HEK293T (cell line): ENCODE measurements at regions of chr10 and their contacts with region 1.

Region 1: DNA sequence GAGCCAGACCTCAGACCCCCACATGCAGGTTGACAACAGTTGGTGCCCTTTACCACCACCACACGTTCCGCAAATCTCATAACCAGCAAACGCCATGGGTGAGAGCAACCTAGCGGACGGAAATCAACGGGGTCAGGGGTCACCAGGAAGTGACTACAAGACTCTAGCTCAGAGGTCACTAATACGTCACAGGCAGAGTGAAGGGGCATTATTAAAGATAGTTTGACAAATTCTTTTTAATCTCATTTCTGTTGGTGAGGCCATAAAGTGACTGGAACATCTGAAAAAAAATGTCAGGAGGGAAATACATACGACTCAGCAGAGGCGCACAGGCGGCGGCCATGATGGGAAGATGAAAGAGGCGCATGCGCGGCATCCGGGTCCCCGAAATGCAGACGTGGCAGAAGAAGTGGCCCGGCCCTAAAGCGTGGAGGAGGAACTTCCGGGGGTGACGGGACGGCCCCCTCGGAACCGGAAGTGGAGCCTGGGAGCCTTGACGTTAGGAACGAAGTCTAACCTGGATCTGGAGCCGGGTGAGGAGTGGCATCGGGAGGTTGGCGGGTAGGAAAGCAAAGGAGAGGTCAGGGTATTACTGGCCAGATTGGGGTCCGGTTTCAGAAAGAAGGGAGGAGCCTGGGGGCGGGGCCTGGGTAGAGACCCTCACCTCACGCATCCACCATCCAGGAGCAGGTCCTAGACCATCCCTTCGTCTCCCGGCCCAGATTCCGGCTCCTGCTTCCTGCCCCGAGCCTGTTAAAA is at the start of gene SEC24C:
- DNase-seq: peak; percentile 97

Region 2: GRCh38 chr10:73730153-73730906 is 13.8 kb before region 1 on chr10:
- CTCF ChIA-PET with region 1: no interaction called
- POLR2A ChIA-PET with region 1: interaction called, 68 read pairs
- DNase-seq: peak; percentile 81

Region 3: GRCh38 chr10:73772280-73773151 is 28.4 kb after region 1 on chr10:
- CTCF ChIA-PET with region 1: no interaction called
- POLR2A ChIA-PET with region 1: interaction called, 26 read pairs
- DNase-seq: peak; percentile 63

Region 4: GRCh38 chr10:73781879-73782744 is 38.0 kb after region 1 on chr10 and contains the start of gene CHCHD1:
- CTCF ChIA-PET with region 1: no interaction called
- POLR2A ChIA-PET with region 1: interaction called, 10 read pairs
- DNase-seq: peak; percentile 76